H1 (cell line): ENCODE measurements at regions of chr2 and their contacts with region 1.

Region 1: GRCh38 chr2:75064691-75065396 is 106.4 kb downstream of the POLE4 start:
- DNase-seq: peak in 1 of 2 experiments; percentile 90
- H3K4me3 ChIP-seq: no peak overlapping the region
- H3K27ac ChIP-seq: no peak overlapping the region
- H3K4me1 ChIP-seq: peaks cover 0 to 6% (median 0%) of the 10 kb centered on the region in 4 experiments; a peak in 3 of 7 replicates
- H3K27me3 ChIP-seq: peaks cover 0 to 2% (median 0%) of the 10 kb centered on the region in 4 experiments; a peak in 2 of 7 replicates
- CTCF ChIP-seq: peak; percentile 86 to 92 (median 90)
- EP300 ChIP-seq: no peak
- POLR2A ChIP-seq: no peak
- RAD21 ChIP-seq: peak; percentile 77 to 81

Region 2: DNA sequence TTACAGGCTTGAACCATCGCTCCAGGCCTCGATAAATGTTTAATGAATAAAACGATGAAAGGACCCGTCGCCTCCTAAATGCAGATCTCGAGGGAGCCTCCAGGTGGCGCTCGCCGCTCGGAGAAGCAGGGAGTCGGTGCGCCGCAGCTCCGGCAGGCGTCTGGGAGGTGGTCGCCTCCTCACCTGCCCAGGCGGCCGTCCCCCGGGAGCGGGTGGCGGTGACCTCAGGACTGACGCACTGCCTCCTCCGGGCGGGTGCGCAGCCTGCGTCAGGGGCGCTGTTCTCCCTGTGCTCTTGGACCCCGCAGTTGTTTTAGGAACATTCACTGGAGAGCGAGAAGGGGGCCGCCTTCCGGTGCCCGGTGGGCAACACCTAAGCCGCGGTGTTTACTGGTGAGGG is 145.0 kb before region 1 on chr2:
- CTCF ChIA-PET with region 1: interaction called, 26 read pairs
- POLR2A ChIA-PET with region 1: no interaction called
- DNase-seq: peak; percentile 57 to 95
- H3K4me3 ChIP-seq: peak overlapping the region; percentile 16 to 58 (median 38); a peak in 5 of 8 replicates
- H3K27ac ChIP-seq: no peak overlapping the region
- H3K4me1 ChIP-seq: no peaks in the 10 kb centered on the region
- H3K27me3 ChIP-seq: peaks cover 0 to 2% (median 0%) of the 10 kb centered on the region in 4 experiments; a peak in 1 of 7 replicates
- CTCF ChIP-seq: peak; percentile 75 to 97 (median 86)
- EP300 ChIP-seq: no peak
- POLR2A ChIP-seq: no peak
- RAD21 ChIP-seq: peak; percentile 92 to 96

Region 3: GRCh38 chr2:75053484-75054112 is 11.2 kb before region 1 on chr2:
- CTCF ChIA-PET with region 1: interaction called, 36 read pairs
- POLR2A ChIA-PET with region 1: no interaction called
- DNase-seq: peak; percentile 31 to 66
- H3K4me3 ChIP-seq: no peak overlapping the region
- H3K27ac ChIP-seq: no peak overlapping the region
- H3K4me1 ChIP-seq: peaks cover 9 to 35% (median 14%) of the 10 kb centered on the region in 4 experiments; a peak in 6 of 7 replicates
- H3K27me3 ChIP-seq: peaks cover 0 to 4% (median 2%) of the 10 kb centered on the region in 4 experiments; a peak in 4 of 7 replicates
- CTCF ChIP-seq: peak; percentile 74 to 93 (median 77)
- EP300 ChIP-seq: no peak
- POLR2A ChIP-seq: no peak
- RAD21 ChIP-seq: peak; percentile 84 to 90

Region 4: GRCh38 chr2:75157430-75157829 is 92.6 kb after region 1 on chr2:
- CTCF ChIA-PET with region 1: interaction called, 10 read pairs
- POLR2A ChIA-PET with region 1: no interaction called
- DNase-seq: no peak
- H3K4me3 ChIP-seq: no peak overlapping the region
- H3K27ac ChIP-seq: no peak overlapping the region
- H3K4me1 ChIP-seq: peaks cover 4 to 10% (median 4%) of the 10 kb centered on the region in 4 experiments; a peak in 6 of 7 replicates
- H3K27me3 ChIP-seq: no peaks in the 10 kb centered on the region
- CTCF ChIP-seq: peak in 2 of 3 experiments; percentile 30 to 41; a peak in 2 of 4 replicates
- EP300 ChIP-seq: no peak
- POLR2A ChIP-seq: no peak
- RAD21 ChIP-seq: peak; percentile 61 to 64

Region 5: DNA sequence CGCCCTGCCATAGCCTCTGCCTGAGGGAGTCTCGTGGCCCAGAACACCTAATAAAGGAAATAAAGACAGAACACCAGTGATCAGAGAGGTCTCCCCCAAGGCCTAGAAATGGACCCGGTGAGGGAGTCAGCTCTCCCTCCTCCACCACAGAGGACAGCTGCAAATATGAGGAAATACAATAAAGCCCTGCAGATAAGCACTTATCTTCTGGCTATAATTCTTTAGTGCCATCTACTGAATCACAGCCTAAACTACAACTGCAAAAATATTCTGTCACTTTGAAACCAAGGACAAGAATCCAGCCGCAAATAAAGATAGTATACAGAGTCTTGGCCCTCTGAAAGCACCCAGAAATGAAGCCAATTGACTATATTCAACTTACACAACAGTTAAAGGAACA is 176.9 kb after region 1 on chr2:
- CTCF ChIA-PET with region 1: interaction called, 22 read pairs
- POLR2A ChIA-PET with region 1: no interaction called
- DNase-seq: no peak
- H3K4me3 ChIP-seq: no peak overlapping the region
- H3K27ac ChIP-seq: no peak overlapping the region
- H3K4me1 ChIP-seq: no peaks in the 10 kb centered on the region
- H3K27me3 ChIP-seq: no peaks in the 10 kb centered on the region
- CTCF ChIP-seq: peak in 2 of 3 experiments; percentile 61 to 62; a peak in 3 of 4 replicates
- EP300 ChIP-seq: no peak
- POLR2A ChIP-seq: no peak
- RAD21 ChIP-seq: peak; percentile 79 to 84